ENCODE measurements at regions of chr1 and their contacts with region 1.

Region 1: DNA sequence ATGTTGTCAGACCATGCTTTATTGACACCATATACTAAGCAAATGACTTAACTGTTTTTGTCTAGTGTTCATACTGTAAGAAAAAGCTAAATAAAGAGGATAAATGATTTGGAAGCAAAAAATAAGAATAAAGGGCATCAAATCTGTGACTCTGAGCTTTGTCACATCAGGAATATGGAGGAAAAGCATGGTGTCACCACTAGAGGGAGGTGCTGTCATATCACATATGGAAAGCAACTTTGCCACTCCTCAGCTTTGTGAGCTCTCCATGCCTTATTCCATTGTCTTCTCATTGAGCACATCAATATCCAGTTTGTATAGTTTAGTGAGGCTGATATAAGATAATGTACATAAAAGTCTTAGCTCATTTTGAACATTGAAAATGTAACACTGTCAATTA is 20.8 kb upstream of the GBP1 start:
- DNase-seq: no peak
- ATAC-seq: no peak

Region 2: GRCh38 chr1:89276690-89277089 is 190.9 kb after region 1 on chr1:
- intact Hi-C with region 1: loop called (anchors 5 kb)
- DNase-seq: no peak
- ATAC-seq: peak; percentile 59

Region 3: GRCh38 chr1:89358287-89358893 is 272.6 kb after region 1 on chr1:
- intact Hi-C with region 1: loop called (anchors 10 kb)
- DNase-seq: peak; percentile 85
- ATAC-seq: peak; percentile 92

Region 4: GRCh38 chr1:89454845-89455521 is 369.2 kb after region 1 on chr1:
- intact Hi-C with region 1: loop called (anchors 10 kb)
- DNase-seq: no peak
- ATAC-seq: peak; percentile 61

Measured in Right ventricle myocardium superior (tissue), 1 donor.